ENCODE measurements at regions of chr10 and their contacts with region 1.

Region 1: DNA sequence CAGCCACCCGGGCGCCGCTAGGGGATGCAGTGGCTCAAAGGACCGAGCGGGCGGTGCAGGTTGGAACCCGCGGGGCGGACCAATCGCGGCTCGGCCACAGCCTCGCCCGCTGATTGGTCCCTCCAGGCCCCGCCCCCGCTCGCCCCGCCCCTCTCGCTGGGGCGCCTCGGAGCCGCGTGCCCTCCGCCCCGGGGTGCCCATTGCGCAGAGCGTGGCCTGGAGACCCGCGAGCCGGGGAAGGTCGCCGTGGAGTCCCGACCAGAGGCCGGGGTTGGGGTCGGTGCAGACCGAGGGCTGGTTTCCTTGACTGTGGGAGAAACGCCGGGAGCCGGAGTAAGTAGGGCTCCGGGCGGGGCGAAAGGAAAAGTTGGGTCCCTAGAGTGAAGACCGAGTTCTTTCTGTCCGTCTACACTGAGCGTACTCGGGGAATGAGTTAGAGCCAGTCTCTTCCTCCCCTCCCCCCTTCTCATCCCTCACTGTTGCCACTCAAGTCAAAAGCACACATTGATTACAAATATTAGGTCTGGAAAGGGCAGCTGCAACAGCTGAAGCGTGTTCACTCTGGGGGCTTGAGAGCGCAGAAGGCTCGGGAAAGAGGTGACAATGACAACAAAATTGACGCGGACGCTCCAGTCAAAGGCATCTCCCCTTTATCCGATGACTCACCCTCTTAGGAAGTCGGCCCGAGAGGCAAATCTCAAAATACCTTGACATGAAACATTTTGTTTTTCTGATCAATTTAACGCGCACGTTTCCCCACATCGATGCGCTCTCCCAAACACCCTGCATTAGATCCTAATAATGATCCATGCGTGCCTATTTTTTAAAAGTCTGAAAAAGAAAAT is 820 bp upstream of the GATA3 start:
- DNase-seq: peak; percentile 93

Region 2: GRCh38 chr10:7136016-7136415 is 917.7 kb before region 1 on chr10:
- intact Hi-C with region 1: loop called in 1 of 2 experiments (anchors 5 kb)
- DNase-seq: no peak

Region 3: GRCh38 chr10:7932301-7933036 is 121.2 kb before region 1 on chr10:
- intact Hi-C with region 1: no loop called
- DNase-seq: no peak

Region 4: GRCh38 chr10:8009031-8009430 is 44.6 kb before region 1 on chr10:
- intact Hi-C with region 1: loop called in 1 of 2 experiments (anchors 1 kb)
- DNase-seq: no peak

Measured in posterior vena cava (tissue), 2 donors.